ENCODE measurements at regions of chr21 and their contacts with region 1.

Region 1: DNA sequence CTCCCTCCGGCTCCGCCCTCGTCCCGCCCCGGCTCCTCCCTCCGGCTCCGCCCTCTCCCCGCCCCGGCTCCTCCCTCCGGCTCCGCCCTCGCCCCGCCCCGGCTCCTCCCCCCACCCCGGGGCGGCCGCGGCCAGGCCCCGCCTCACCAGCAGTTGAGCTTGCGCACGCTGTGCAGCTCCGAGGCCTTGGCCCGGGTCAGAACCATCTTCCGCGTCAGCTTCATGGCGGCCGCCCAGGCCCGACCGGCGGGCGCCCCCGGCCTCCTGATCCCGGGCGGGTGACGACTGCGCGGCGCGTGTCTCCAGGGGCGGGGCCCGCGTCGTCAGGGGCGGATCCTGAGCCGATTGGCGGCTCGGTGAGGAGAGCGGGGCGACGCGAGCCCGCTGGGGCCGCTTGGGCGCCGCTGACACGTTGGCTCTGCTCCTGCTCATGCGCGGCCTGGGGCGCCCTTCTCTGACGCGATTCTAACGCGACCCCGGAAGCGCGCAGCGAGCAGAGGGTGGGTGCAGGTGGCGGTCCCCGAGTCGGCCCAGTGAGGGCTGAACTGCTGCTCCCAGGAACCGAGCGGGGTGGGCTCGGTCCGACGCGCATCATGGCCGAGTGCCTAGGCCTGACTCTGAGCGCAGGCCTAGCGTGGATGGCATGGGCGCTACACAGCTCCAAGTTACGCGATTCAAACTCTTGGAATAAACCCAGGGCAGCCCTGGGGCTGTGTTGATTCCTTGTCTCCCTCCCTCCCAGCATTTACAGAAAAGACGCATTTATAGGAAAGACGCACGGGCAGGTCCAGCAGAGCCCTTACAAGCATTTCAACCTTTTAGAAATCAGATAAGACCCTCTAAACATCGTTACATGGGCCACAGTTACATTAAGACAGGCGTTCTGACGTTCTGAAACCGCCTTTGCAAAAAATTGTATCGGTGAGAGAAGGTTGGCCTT is at the start of gene CFAP410:
- DNase-seq: peak; percentile 95 to 96 (median 95)
- H3K4me3 ChIP-seq: peak within 1 kb of the TSS; percentile 61 to 91 (median 65)
- H3K4me3 Mint-ChIP-seq: peak within 1 kb of the TSS; percentile 82 to 94
- H3K27ac ChIP-seq: peak within 1 kb of the TSS; percentile 86 to 97
- H3K27ac Mint-ChIP-seq: peak within 1 kb of the TSS; percentile 95 to 99 (median 96)
- H3K4me1 ChIP-seq: peaks cover 10 to 18% of the 10 kb centered on the region in 2 donors
- H3K4me1 Mint-ChIP-seq: peaks cover 15% of the 10 kb centered on the region
- H3K27me3 ChIP-seq: no peaks in the 10 kb centered on the region
- H3K27me3 Mint-ChIP-seq: peaks cover 4 to 10% (median 5%) of the 10 kb centered on the region in 3 donors
- CTCF ChIP-seq: no peak
- polyA plus RNA-seq, gene CFAP410: 14.8 to 23.5 (median 17.3) TPM

Region 2: DNA sequence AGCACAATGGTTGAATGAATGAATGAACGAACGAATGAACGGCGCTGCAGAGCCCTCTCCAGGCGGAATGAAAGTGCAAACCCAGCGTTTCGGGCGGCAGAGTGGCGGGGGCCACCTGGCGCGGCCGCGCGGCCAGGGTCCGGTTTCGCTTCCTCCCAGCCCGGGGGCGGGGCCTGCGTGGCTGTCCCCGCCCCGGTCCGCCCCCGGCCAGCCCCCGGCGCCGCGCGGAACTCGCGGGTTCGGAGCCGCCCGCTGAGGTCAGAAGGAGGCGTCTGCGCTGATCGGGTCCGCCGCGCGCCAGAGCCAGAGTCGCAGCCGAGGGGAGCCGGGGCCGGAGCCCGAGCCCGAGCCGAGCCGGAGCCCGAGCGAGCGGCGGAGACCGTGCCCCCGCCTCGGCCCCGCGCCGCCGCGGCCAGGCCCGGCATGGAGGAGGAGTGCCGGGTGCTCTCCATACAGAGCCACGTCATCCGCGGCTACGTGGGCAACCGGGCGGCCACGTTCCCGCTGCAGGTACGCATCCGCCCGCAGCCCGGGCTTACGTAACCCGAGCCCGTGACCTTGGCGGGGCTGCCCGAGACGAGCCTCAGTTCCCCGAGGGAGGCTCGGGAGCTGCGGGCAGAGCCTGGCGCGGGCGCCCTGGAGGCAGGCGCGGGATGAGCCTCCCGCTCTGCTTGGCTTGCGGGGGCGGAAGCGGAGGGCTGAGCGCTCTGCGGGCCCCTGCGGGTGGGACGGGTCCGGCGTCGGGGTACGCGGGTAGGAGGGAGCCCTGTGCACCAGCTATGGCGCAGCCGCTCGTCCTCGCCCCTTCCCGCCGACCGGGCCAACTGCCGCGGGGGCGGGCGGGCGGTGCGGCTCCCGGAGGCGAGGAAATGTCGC is 620.1 kb before region 1 on chr21 and contains the start of gene PDXK:
- intact Hi-C with region 1: no loop called
- DNase-seq: peak; percentile 77 to 86 (median 83)
- H3K4me3 ChIP-seq: peak within 1 kb of the TSS; percentile 87 to 93 (median 90)
- H3K4me3 Mint-ChIP-seq: peak within 1 kb of the TSS; percentile 91 to 96
- H3K27ac ChIP-seq: peak within 1 kb of the TSS; percentile 65 to 92
- H3K27ac Mint-ChIP-seq: peak within 1 kb of the TSS; percentile 85 to 95 (median 90)
- H3K4me1 ChIP-seq: peaks cover 50 to 54% of the 10 kb centered on the region in 2 donors
- H3K4me1 Mint-ChIP-seq: peaks cover 50% of the 10 kb centered on the region
- H3K27me3 ChIP-seq: peaks cover 0 to 11% of the 10 kb centered on the region in 2 donors
- H3K27me3 Mint-ChIP-seq: peaks cover 17 to 34% (median 28%) of the 10 kb centered on the region in 3 donors
- CTCF ChIP-seq: no peak
- polyA plus RNA-seq, gene PDXK: 128 to 214 (median 210) TPM

Region 3: GRCh38 chr21:44299458-44300261 is 39.6 kb before region 1 on chr21 and contains the start of gene PFKL:
- intact Hi-C with region 1: loop called in 1 of 2 experiments (anchors 2 kb)
- DNase-seq: peak; percentile 42 to 43 (median 42)
- H3K4me3 ChIP-seq: peak within 1 kb of the TSS; percentile 63 to 85 (median 64)
- H3K4me3 Mint-ChIP-seq: peak within 1 kb of the TSS; percentile 81 to 90
- H3K27ac ChIP-seq: peak within 1 kb of the TSS; percentile 82 to 85
- H3K27ac Mint-ChIP-seq: peak within 1 kb of the TSS; percentile 89 to 93 (median 90)
- H3K4me1 ChIP-seq: peaks cover 37 to 48% of the 10 kb centered on the region in 2 donors
- H3K4me1 Mint-ChIP-seq: peaks cover 43% of the 10 kb centered on the region
- H3K27me3 ChIP-seq: peaks cover 0 to 2% of the 10 kb centered on the region in 2 donors
- H3K27me3 Mint-ChIP-seq: peaks cover 2 to 11% (median 4%) of the 10 kb centered on the region in 3 donors
- CTCF ChIP-seq: no peak
- polyA plus RNA-seq, gene PFKL: 105 to 133 (median 113) TPM

Region 4: DNA sequence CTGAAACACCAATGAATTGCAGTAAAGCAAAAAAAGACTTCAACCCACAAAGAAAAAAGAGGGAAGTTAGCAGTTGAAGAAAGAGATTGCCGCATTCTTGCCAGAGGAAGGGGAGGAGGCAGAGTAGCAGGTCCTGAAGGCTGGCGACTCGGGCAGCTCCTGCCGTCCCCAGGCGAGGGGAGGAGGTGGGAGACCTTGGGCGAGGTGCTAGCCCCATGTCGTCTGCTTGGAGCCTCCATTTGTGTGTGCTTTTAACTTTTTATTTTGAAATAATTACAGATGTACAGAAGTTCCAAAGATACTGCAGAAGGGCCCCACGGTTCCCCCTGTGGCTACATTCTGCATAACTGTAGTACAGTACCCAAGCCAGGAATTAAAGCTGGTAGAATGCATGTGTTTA is 20.9 kb after region 1 on chr21:
- intact Hi-C with region 1: loop called (anchors 2 kb)
- DNase-seq: peak; percentile 55 to 63 (median 60)
- H3K4me3 ChIP-seq: peak overlapping the region in 1 of 3 experiments; percentile 67
- H3K4me3 Mint-ChIP-seq: peak overlapping the region; percentile 59 to 64
- H3K27ac ChIP-seq: peak overlapping the region; percentile 7 to 30
- H3K27ac Mint-ChIP-seq: peak overlapping the region; percentile 73 to 89 (median 80)
- H3K4me1 ChIP-seq: peaks cover 59 to 62% of the 10 kb centered on the region in 2 donors
- H3K4me1 Mint-ChIP-seq: peaks cover 69% of the 10 kb centered on the region
- H3K27me3 ChIP-seq: no peaks in the 10 kb centered on the region
- H3K27me3 Mint-ChIP-seq: peaks cover 0 to 6% (median 3%) of the 10 kb centered on the region in 3 donors
- CTCF ChIP-seq: peak; percentile 65

Region 5: GRCh38 chr21:44454747-44455523 is 115.7 kb after region 1 on chr21 and contains the start of gene LRRC3:
- intact Hi-C with region 1: loop called (anchors 2 to 5 kb)
- DNase-seq: peak; percentile 78 to 85 (median 78)
- H3K4me3 ChIP-seq: peak within 1 kb of the TSS; percentile 38 to 88 (median 50)
- H3K4me3 Mint-ChIP-seq: peak within 1 kb of the TSS; percentile 86 to 89
- H3K27ac ChIP-seq: no peak within 1 kb of the TSS
- H3K27ac Mint-ChIP-seq: peak within 1 kb of the TSS in 2 of 7 donors; percentile 63 to 77
- H3K4me1 ChIP-seq: peaks cover 6 to 13% of the 10 kb centered on the region in 2 donors
- H3K4me1 Mint-ChIP-seq: peaks cover 11% of the 10 kb centered on the region
- H3K27me3 ChIP-seq: peaks cover 0 to 9% of the 10 kb centered on the region in 2 donors
- H3K27me3 Mint-ChIP-seq: peaks cover 14 to 48% (median 19%) of the 10 kb centered on the region in 3 donors
- CTCF ChIP-seq: no peak
- polyA plus RNA-seq, gene LRRC3: 0.30 to 0.59 (median 0.41) TPM

Region 6: GRCh38 chr21:44547656-44548331 is 208.6 kb after region 1 on chr21:
- intact Hi-C with region 1: no loop called
- DNase-seq: no peak
- H3K4me3 ChIP-seq: no peak overlapping the region
- H3K4me3 Mint-ChIP-seq: peak overlapping the region in 1 of 2 donors; percentile 65
- H3K27ac ChIP-seq: no peak overlapping the region
- H3K27ac Mint-ChIP-seq: no peak overlapping the region
- H3K4me1 ChIP-seq: no peaks in the 10 kb centered on the region
- H3K4me1 Mint-ChIP-seq: no peaks in the 10 kb centered on the region
- H3K27me3 ChIP-seq: peaks cover 2 to 16% of the 10 kb centered on the region in 2 donors
- H3K27me3 Mint-ChIP-seq: peaks cover 25 to 51% (median 25%) of the 10 kb centered on the region in 3 donors
- CTCF ChIP-seq: no peak